BJ (cell line): ENCODE measurements at regions of chr5 and their contacts with region 1.

Region 1: GRCh38 chr5:14270209-14270702 is 127.1 kb downstream of the TRIO start:
- DNase-seq: no peak
- H3K4me3 ChIP-seq: no peak overlapping the region
- H3K27me3 ChIP-seq: no peaks in the 10 kb centered on the region
- CTCF ChIP-seq: peak; percentile 82

Region 2: GRCh38 chr5:14142827-14143548 is 127.3 kb before region 1 on chr5 and contains the start of gene TRIO:
- CTCF ChIA-PET with region 1: interaction called, 18 read pairs
- POLR2A ChIA-PET with region 1: interaction called, 5 read pairs
- DNase-seq: peak; percentile 50
- H3K4me3 ChIP-seq: peak within 1 kb of the TSS; percentile 96
- H3K27me3 ChIP-seq: no peaks in the 10 kb centered on the region
- CTCF ChIP-seq: peak; percentile 61
- polyA plus RNA-seq, gene TRIO: 124 and 176 TPM in 2 replicates

Region 3: DNA sequence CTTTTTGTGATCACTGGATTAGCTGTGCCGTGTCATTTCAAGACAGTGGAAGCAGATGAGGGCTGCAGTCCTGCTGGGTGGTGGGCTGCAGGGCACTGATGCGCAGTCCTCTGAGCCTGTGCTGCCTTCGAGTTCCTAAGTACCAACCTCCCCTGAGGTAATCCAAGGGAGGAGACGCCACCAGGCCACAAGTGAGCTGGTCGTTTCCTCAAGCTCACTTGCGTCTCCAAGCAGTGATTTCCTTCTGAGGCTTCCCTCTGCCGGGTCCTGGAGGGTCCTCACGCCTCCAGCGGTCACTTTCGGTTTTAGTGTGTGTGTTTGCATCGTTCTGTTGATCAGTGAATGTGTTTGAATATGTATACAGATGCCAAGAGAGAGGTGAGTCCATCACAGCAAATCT is 11.4 kb before region 1 on chr5:
- CTCF ChIA-PET with region 1: interaction called, 10 read pairs
- POLR2A ChIA-PET with region 1: no interaction called
- DNase-seq: no peak
- H3K4me3 ChIP-seq: no peak overlapping the region
- H3K27me3 ChIP-seq: no peaks in the 10 kb centered on the region
- CTCF ChIP-seq: no peak